ENCODE measurements at regions of chr11 and their contacts with region 1.

Region 1: DNA sequence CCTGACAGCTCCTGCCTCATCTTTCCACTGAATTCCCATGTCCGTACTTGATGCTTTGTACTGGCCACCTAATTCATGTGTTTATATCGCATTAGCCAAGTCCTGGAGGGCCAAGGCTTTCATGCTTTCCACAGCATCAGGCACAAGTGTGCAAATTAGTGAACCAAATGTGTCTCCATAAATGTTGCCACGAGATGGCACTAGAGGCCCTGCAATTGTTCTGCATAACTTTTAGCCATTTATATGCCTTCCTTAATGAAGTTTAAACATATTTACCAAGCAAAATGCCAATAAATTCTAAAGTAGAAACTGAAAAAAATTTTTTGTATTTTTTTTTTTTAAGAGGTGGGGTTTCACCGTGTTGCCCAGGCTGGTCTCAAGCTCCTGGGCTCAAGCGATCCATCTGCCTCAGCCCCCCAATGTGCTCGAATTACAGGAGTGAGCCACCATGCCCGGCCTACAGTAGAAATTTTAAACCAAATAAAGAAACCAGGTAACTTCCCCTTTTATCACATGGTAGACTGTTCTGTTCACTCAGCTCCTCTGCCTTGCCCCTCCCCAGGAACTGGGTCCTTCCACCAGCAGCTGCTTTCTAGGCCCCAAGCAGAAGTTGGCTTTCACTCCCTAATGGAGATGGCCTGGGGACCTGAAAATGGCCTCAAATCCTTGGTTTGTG is 20.8 kb upstream of the IL18BP start:
- DNase-seq: peak; percentile 20 to 75 (median 40)
- ATAC-seq: peak; percentile 62
- H3K4me3 ChIP-seq: no peak overlapping the region
- H3K4me3 Mint-ChIP-seq: no peak overlapping the region
- H3K27ac ChIP-seq: no peak overlapping the region
- H3K27ac Mint-ChIP-seq: no peak overlapping the region
- H3K4me1 ChIP-seq: no peaks in the 10 kb centered on the region
- H3K4me1 Mint-ChIP-seq: no peaks in the 10 kb centered on the region
- H3K27me3 ChIP-seq: no peaks in the 10 kb centered on the region
- H3K27me3 Mint-ChIP-seq: no peaks in the 10 kb centered on the region
- CTCF ChIP-seq: peak; percentile 72

Region 2: GRCh38 chr11:72141066-72141465 is 163.2 kb after region 1 on chr11:
- CTCF ChIA-PET with region 1: interaction called, 7 read pairs
- POLR2A ChIA-PET with region 1: no interaction called
- intact Hi-C with region 1: loop called (anchors 1 kb)
- DNase-seq: peak in 1 of 14 experiments; percentile 4
- ATAC-seq: peak; percentile 25
- H3K4me3 ChIP-seq: no peak overlapping the region
- H3K4me3 Mint-ChIP-seq: no peak overlapping the region
- H3K27ac ChIP-seq: no peak overlapping the region
- H3K27ac Mint-ChIP-seq: no peak overlapping the region
- H3K4me1 ChIP-seq: no peaks in the 10 kb centered on the region
- H3K4me1 Mint-ChIP-seq: no peaks in the 10 kb centered on the region
- H3K27me3 ChIP-seq: no peaks in the 10 kb centered on the region
- H3K27me3 Mint-ChIP-seq: peaks cover 11% of the 10 kb centered on the region
- CTCF ChIP-seq: no peak

Region 3: DNA sequence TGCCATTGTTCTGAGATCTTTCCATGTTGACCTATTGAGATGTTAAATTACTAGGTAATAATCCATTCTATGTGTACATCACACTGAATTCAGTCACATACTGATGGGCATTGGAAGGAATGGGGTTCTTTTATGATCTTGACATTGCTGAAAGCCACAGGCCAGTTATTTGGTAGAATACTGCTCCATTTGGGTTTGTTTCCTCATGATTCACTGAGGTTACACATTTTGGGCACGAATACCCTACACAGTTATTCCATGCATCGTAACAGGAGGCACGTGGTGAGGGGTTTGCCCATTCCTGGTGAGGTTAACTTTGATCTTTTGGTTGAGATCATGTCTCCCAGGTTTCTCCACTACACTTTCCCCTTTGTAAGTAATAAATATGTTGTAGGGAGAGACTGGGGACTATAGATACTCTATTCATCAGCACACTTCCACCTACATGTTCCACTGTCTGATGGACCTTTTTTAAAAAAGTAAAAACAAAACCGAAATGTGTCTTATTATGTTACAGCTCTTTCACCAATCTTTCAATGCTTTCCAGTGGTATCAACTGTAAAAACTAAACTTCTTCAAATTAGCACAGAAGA is 202.0 kb after region 1 on chr11:
- CTCF ChIA-PET with region 1: no interaction called
- POLR2A ChIA-PET with region 1: no interaction called
- intact Hi-C with region 1: loop called in 1 of 2 experiments (anchors 1 kb)
- DNase-seq: no peak
- ATAC-seq: no peak
- H3K4me3 ChIP-seq: no peak overlapping the region
- H3K4me3 Mint-ChIP-seq: no peak overlapping the region
- H3K27ac ChIP-seq: no peak overlapping the region
- H3K27ac Mint-ChIP-seq: no peak overlapping the region
- H3K4me1 ChIP-seq: no peaks in the 10 kb centered on the region
- H3K4me1 Mint-ChIP-seq: no peaks in the 10 kb centered on the region
- H3K27me3 ChIP-seq: no peaks in the 10 kb centered on the region
- H3K27me3 Mint-ChIP-seq: peaks cover 11% of the 10 kb centered on the region
- CTCF ChIP-seq: no peak

Measured in CD4-positive, alpha-beta T cell (primary cell).